Left colon (tissue), 2 donors: ENCODE measurements at regions of chr2 and their contacts with region 1.

Region 1: GRCh38 chr2:176126929-176127773 is 2.4 kb upstream of the HOXD8 start:
- DNase-seq: peak in 1 of 2 donors; percentile 88
- ATAC-seq: no peak

Region 2: GRCh38 chr2:176024083-176024482 is 103.1 kb before region 1 on chr2:
- intact Hi-C with region 1: no loop called
- DNase-seq: no peak
- ATAC-seq: no peak

Region 3: GRCh38 chr2:176643646-176644045 is 516.5 kb after region 1 on chr2:
- intact Hi-C with region 1: loop called in 1 of 2 experiments (anchors 10 kb)
- DNase-seq: no peak
- ATAC-seq: no peak

Region 4: DNA sequence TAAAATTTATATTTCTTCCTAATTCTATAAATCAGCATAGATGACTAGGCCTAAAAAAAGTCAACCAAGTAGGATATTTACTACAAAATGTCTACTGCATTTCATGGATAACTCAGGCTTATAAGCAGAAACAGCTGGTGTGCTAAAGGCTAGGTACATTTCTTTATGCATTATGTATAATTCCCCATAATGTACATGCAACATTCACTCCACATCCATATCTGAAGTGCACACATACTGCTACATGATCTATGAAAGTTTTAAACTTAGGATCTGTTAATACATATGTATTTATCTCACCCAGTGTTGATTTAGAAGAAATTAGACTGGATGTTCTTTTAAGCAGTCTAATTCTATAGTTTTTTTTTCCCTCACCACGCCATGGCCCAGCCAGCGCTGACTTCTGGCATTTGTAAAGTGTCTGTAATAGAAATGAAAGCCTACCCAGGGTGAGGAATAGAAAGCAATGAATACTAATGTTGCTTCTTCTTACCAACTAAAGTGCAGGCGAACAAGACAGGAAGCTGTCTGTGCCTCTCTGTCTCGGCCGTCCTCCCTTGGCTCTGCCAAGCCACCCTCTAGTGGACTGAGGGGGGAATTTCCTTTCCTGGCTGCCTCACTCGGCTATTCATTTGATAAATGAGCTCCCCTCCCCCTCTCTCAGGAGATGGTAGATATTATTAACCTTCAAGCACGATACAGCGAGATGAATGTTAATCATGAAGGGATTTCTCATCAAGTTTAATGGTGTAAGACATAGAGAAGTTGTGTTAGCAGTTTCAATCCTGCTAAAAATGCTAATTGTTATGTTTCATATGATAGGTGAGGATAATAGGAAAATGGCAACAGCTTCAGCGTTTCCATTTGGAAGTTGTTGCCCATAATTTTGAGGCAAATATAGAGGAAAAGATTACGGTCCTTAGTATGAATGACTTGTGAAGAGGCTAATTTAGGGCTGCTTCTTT is 526.6 kb after region 1 on chr2:
- intact Hi-C with region 1: loop called (anchors 10 kb)
- DNase-seq: peak; percentile 59 to 64
- ATAC-seq: peak; percentile 96

Region 5: GRCh38 chr2:177148477-177149154 is 1021.5 kb after region 1 on chr2:
- intact Hi-C with region 1: loop called in 1 of 2 experiments (anchors 5 kb)
- DNase-seq: peak; percentile 75 to 85
- ATAC-seq: peak; percentile 96